Right cardiac atrium (tissue), 5 donors: ENCODE measurements at regions of chr5 and their contacts with region 1.

Region 1: GRCh38 chr5:36414869-36415282 is 113.2 kb upstream of the RANBP3L start:
- DNase-seq: no peak
- ATAC-seq: peak; percentile 48 to 51
- H3K4me3 ChIP-seq: no peak overlapping the region
- H3K27ac ChIP-seq: no peak overlapping the region
- H3K4me1 ChIP-seq: no peaks in the 10 kb centered on the region
- H3K27me3 ChIP-seq: no peaks in the 10 kb centered on the region

Region 2: GRCh38 chr5:36507332-36507952 is 92.6 kb after region 1 on chr5:
- intact Hi-C with region 1: loop called in 3 of 4 experiments (anchors 5 to 10 kb)
- DNase-seq: peak; percentile 73 to 91 (median 85)
- ATAC-seq: peak; percentile 59 to 65
- H3K4me3 ChIP-seq: no peak overlapping the region
- H3K27ac ChIP-seq: no peak overlapping the region
- H3K4me1 ChIP-seq: no peaks in the 10 kb centered on the region
- H3K27me3 ChIP-seq: no peaks in the 10 kb centered on the region

Region 3: GRCh38 chr5:36606428-36607113 is 191.7 kb after region 1 on chr5 and contains the start of gene SLC1A3:
- intact Hi-C with region 1: loop called in 1 of 4 experiments (anchors 5 kb)
- DNase-seq: peak; percentile 53 to 80 (median 56)
- ATAC-seq: peak; percentile 93 to 95
- H3K4me3 ChIP-seq: peak within 1 kb of the TSS; percentile 63
- H3K27ac ChIP-seq: peak within 1 kb of the TSS; percentile 88
- H3K4me1 ChIP-seq: no peaks in the 10 kb centered on the region
- H3K27me3 ChIP-seq: no peaks in the 10 kb centered on the region
- total RNA-seq, gene SLC1A3: 31.1 to 44.5 (median 35.2) TPM

Region 4: DNA sequence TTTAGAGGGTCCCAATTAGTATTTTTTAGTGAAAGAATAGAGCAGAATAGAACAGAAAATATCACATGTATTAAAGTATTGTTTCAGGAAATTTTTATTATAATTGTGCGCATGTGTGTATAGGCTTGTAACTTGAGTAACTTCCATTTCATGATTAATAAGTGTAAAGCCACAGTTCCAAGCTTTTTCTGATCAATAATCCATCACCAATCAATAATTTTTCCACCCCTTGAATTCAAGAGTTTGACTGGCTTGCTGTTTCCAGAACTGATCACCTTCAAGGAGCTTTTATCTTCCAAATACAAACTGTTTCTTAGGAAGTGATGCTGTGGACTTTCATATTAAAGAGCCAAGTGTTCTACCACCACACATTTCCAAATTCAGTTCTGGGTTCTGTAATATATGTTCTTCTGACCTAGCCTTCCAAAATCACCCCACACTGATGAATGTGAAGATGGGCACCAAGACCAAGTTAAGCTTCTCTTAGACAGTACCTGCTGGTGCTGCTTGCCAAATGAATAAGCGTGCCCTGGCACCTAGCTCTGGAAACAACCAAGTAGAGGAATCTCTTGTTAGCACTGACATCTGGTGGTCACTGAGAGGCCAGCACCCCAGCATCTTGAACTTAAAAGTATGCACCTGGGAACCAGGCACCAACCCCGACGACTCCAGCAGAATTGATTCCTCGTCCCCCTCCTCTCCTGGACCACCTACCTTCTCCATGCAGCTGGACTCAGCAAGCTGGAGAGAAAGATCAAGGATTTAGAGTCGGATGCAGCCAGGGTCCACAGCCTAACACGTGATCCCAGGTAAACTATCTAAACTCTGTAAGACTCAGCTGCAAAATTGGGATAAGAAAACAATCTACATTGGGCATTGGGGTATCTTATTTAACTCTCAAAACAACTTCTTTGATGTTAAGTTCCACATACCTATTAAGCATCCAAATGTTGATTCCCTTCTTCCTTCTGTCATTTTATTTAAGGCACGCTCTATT is 281.1 kb after region 1 on chr5:
- intact Hi-C with region 1: loop called (anchors 2 to 5 kb)
- DNase-seq: peak; percentile 47 to 76 (median 61)
- ATAC-seq: peak in 1 of 2 donors; percentile 31
- H3K4me3 ChIP-seq: no peak overlapping the region
- H3K27ac ChIP-seq: no peak overlapping the region
- H3K4me1 ChIP-seq: no peaks in the 10 kb centered on the region
- H3K27me3 ChIP-seq: no peaks in the 10 kb centered on the region